ENCODE measurements at regions of chr10 and their contacts with region 1.

Region 1: GRCh38 chr10:60646966-60647796 is 131.1 kb upstream of the CDK1 start:
- DNase-seq: no peak
- H3K4me3 ChIP-seq: no peak overlapping the region
- H3K27ac ChIP-seq: no peak overlapping the region
- H3K4me1 ChIP-seq: peaks cover 0 to 3% (median 2%) of the 10 kb centered on the region in 4 donors
- H3K27me3 ChIP-seq: no peaks in the 10 kb centered on the region
- CTCF ChIP-seq: peak; percentile 71 to 81 (median 80)
- EP300 ChIP-seq: no peak
- POLR2A ChIP-seq: no peak

Region 2: GRCh38 chr10:60099998-60100747 is 547.0 kb before region 1 on chr10:
- intact Hi-C with region 1: loop called (anchors 10 kb)
- DNase-seq: no peak
- H3K4me3 ChIP-seq: no peak overlapping the region
- H3K27ac ChIP-seq: no peak overlapping the region
- H3K4me1 ChIP-seq: peaks cover 0 to 7% (median 5%) of the 10 kb centered on the region in 4 donors
- H3K27me3 ChIP-seq: no peaks in the 10 kb centered on the region
- CTCF ChIP-seq: peak; percentile 56 to 58 (median 58)
- EP300 ChIP-seq: no peak
- POLR2A ChIP-seq: no peak

Region 3: GRCh38 chr10:60208676-60209269 is 438.4 kb before region 1 on chr10:
- intact Hi-C with region 1: loop called (anchors 10 kb)
- DNase-seq: no peak
- H3K4me3 ChIP-seq: no peak overlapping the region
- H3K27ac ChIP-seq: no peak overlapping the region
- H3K4me1 ChIP-seq: no peaks in the 10 kb centered on the region
- H3K27me3 ChIP-seq: no peaks in the 10 kb centered on the region
- CTCF ChIP-seq: peak; percentile 62 to 72 (median 69)
- EP300 ChIP-seq: no peak
- POLR2A ChIP-seq: no peak

Region 4: GRCh38 chr10:60444494-60445064 is 202.6 kb before region 1 on chr10:
- intact Hi-C with region 1: loop called (anchors 2 kb)
- DNase-seq: no peak
- H3K4me3 ChIP-seq: no peak overlapping the region
- H3K27ac ChIP-seq: no peak overlapping the region
- H3K4me1 ChIP-seq: peaks cover 12 to 26% (median 19%) of the 10 kb centered on the region in 4 donors
- H3K27me3 ChIP-seq: no peaks in the 10 kb centered on the region
- CTCF ChIP-seq: peak; percentile 63 to 66 (median 66)
- EP300 ChIP-seq: no peak
- POLR2A ChIP-seq: no peak

Region 5: GRCh38 chr10:60549686-60550085 is 97.5 kb before region 1 on chr10:
- intact Hi-C with region 1: loop called (anchors 10 kb)
- DNase-seq: no peak
- H3K4me3 ChIP-seq: no peak overlapping the region
- H3K27ac ChIP-seq: no peak overlapping the region
- H3K4me1 ChIP-seq: no peaks in the 10 kb centered on the region
- H3K27me3 ChIP-seq: no peaks in the 10 kb centered on the region
- CTCF ChIP-seq: peak in 2 of 3 experiments; percentile 9 to 17
- EP300 ChIP-seq: no peak
- POLR2A ChIP-seq: no peak

Measured in esophagus muscularis mucosa (tissue), 4 donors.